PC-9 (cell line): ENCODE measurements at regions of chr6 and their contacts with region 1.

Region 1: GRCh38 chr6:44172731-44173500 is 14.3 kb downstream of the CAPN11 start:
- DNase-seq: peak; percentile 67 to 74
- H3K4me3 ChIP-seq: no peak overlapping the region
- H3K27ac ChIP-seq: no peak overlapping the region
- H3K4me1 ChIP-seq: no peaks in the 10 kb centered on the region
- H3K27me3 ChIP-seq: 0 out of 2 replicates have a peak, but pooled peaks cover 10% of the 10 kb centered on the region
- CTCF ChIP-seq: peak; percentile 92

Region 2: GRCh38 chr6:44096612-44097011 is 76.3 kb before region 1 on chr6:
- CTCF ChIA-PET with region 1: no interaction called
- POLR2A ChIA-PET with region 1: no interaction called
- intact Hi-C with region 1: loop called (anchors 1 kb)
- DNase-seq: peak; percentile 55 to 73
- H3K4me3 ChIP-seq: no peak overlapping the region
- H3K27ac ChIP-seq: no peak overlapping the region
- H3K4me1 ChIP-seq: no peaks in the 10 kb centered on the region
- H3K27me3 ChIP-seq: no peaks in the 10 kb centered on the region
- CTCF ChIP-seq: peak; percentile 80

Region 3: DNA sequence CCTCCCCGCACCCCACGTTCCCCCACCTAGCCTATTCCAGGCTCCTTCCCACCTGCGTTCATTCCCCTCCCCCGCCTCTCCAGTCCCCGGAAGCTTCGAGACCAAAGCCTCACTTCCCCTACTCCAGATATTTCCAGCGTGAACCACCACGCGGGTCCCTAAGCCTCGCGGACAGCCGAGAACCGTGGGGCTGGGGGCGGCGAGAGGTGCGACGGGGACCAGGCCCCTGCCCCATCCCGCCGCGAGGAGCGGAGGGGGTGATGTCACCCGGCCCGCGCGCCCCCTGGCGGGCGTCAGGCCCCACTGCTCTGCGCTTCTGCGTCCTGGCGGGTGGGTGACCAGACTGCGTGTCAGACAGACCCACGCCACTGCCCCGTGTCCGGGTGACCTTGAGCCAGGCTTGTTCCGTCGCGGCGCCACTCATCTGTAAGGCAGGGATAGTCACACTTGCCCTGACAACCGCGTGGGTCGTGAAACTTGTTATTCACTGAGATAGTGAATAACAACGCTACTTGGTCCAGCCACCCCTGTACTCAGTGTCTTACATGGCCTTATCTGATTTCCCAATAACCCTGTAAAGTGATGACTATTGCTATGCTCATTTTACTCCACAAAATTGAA is 65.0 kb after region 1 on chr6:
- CTCF ChIA-PET with region 1: no interaction called
- POLR2A ChIA-PET with region 1: no interaction called
- intact Hi-C with region 1: loop called (anchors 1 kb)
- DNase-seq: peak; percentile 36 to 78
- H3K4me3 ChIP-seq: peak overlapping the region; percentile 63
- H3K27ac ChIP-seq: no peak overlapping the region
- H3K4me1 ChIP-seq: peaks cover 17% of the 10 kb centered on the region
- H3K27me3 ChIP-seq: no peaks in the 10 kb centered on the region
- CTCF ChIP-seq: peak; percentile 98

Region 4: GRCh38 chr6:44246663-44247337 is 73.9 kb after region 1 on chr6 and contains the start of gene HSP90AB1:
- CTCF ChIA-PET with region 1: no interaction called
- POLR2A ChIA-PET with region 1: interaction called, 6 read pairs
- intact Hi-C with region 1: loop called (anchors 2 kb)
- DNase-seq: peak; percentile 94 to 97
- H3K4me3 ChIP-seq: peak within 1 kb of the TSS; percentile 98
- H3K27ac ChIP-seq: peak within 1 kb of the TSS; percentile 94
- H3K4me1 ChIP-seq: peaks cover 35% of the 10 kb centered on the region
- H3K27me3 ChIP-seq: no peaks in the 10 kb centered on the region
- CTCF ChIP-seq: no peak
- total RNA-seq, gene HSP90AB1: 895 and 1,136 TPM in 2 replicates

Region 5: GRCh38 chr6:44257025-44257752 is 84.3 kb after region 1 on chr6 and contains the start of gene SLC35B2:
- CTCF ChIA-PET with region 1: interaction called, 14 read pairs
- POLR2A ChIA-PET with region 1: interaction called, 5 read pairs
- intact Hi-C with region 1: loop called (anchors 2 kb)
- DNase-seq: peak; percentile 59 to 79
- H3K4me3 ChIP-seq: peak within 1 kb of the TSS; percentile 78
- H3K27ac ChIP-seq: peak within 1 kb of the TSS; percentile 36
- H3K4me1 ChIP-seq: peaks cover 16% of the 10 kb centered on the region; the same call in 1 of the 2 replicates
- H3K27me3 ChIP-seq: no peaks in the 10 kb centered on the region
- CTCF ChIP-seq: no peak
- total RNA-seq, gene SLC35B2: 57.6 and 59.7 TPM in 2 replicates

Region 6: GRCh38 chr6:44312901-44313788 is 140.2 kb after region 1 on chr6 and contains the start of gene AARS2:
- CTCF ChIA-PET with region 1: interaction called, 8 read pairs
- POLR2A ChIA-PET with region 1: interaction called, 13 read pairs
- intact Hi-C with region 1: no loop called
- DNase-seq: peak; percentile 73 to 83
- H3K4me3 ChIP-seq: peak within 1 kb of the TSS; percentile 99
- H3K27ac ChIP-seq: 0 out of 2 replicates have a peak within 1 kb of the TSS, but pooled peaks have one; percentile 27
- H3K4me1 ChIP-seq: peaks cover 9% of the 10 kb centered on the region
- H3K27me3 ChIP-seq: peaks cover 19% of the 10 kb centered on the region
- CTCF ChIP-seq: peak; percentile 92
- total RNA-seq, gene AARS2: 11.6 and 12.5 TPM in 2 replicates